Calu3 (cell line): ENCODE measurements at regions of chr1 and their contacts with region 1.

Region 1: GRCh38 chr1:227728059-227728891 is 6.8 kb downstream of the JMJD4 start:
- DNase-seq: peak; percentile 85
- H3K4me3 Mint-ChIP-seq: peak overlapping the region; percentile 79
- H3K27ac Mint-ChIP-seq: peak overlapping the region; percentile 78
- H3K4me1 Mint-ChIP-seq: peaks cover 8% of the 10 kb centered on the region
- H3K27me3 Mint-ChIP-seq: no peaks in the 10 kb centered on the region
- CTCF ChIP-seq: no peak

Region 2: GRCh38 chr1:227563324-227564201 is 164.7 kb before region 1 on chr1 and contains the start of gene ZNF678:
- CTCF ChIA-PET with region 1: no interaction called
- intact Hi-C with region 1: loop called (anchors 5 kb)
- DNase-seq: peak; percentile 97
- H3K4me3 Mint-ChIP-seq: peak within 1 kb of the TSS; percentile 98
- H3K27ac Mint-ChIP-seq: peak within 1 kb of the TSS; percentile 92
- H3K4me1 Mint-ChIP-seq: no peaks in the 10 kb centered on the region
- H3K27me3 Mint-ChIP-seq: no peaks in the 10 kb centered on the region
- CTCF ChIP-seq: no peak
- total RNA-seq, gene ZNF678: 6.5 and 7.0 TPM in 2 replicates